ENCODE measurements at regions of chr14 and their contacts with region 1.

Region 1: DNA sequence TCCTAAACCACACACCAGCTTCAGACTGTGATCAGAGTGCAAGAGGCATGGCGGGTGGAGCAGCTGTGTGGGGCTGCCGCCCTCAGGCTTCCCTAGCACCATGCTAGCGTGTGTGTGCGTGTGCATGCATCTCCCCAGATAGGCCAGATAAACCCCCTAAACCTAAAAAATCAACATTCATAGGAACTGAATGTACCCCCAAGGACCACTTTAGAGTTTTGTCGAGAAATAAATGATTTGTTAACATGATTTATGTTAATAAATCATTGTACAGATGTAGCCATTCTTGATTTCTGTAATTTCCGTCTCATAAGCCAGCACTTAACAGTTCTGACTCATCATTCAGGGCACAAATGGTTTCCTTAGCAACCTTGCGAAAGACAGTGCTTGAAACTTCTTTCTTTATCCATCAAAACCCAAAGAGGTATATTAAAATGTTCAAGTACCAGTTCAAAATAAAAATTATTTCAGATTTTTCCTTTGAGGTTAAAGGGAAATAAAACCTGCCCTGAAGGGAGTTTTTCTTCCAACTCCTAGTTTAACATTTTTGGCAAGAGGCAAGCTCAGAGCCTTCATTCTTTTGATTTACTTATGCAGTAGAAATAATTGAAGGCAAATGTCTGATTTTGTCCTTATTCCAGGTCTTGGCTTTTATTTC is 206.2 kb upstream of the RGS6 start:
- DNase-seq: no peak
- H3K4me3 ChIP-seq: no peak overlapping the region
- H3K27ac ChIP-seq: peak overlapping the region; percentile 62 to 82
- H3K4me1 ChIP-seq: peaks cover 0 to 6% of the 10 kb centered on the region in 2 donors
- H3K27me3 ChIP-seq: no peaks in the 10 kb centered on the region
- CTCF ChIP-seq: no peak
- POLR2A ChIP-seq: no peak

Region 2: DNA sequence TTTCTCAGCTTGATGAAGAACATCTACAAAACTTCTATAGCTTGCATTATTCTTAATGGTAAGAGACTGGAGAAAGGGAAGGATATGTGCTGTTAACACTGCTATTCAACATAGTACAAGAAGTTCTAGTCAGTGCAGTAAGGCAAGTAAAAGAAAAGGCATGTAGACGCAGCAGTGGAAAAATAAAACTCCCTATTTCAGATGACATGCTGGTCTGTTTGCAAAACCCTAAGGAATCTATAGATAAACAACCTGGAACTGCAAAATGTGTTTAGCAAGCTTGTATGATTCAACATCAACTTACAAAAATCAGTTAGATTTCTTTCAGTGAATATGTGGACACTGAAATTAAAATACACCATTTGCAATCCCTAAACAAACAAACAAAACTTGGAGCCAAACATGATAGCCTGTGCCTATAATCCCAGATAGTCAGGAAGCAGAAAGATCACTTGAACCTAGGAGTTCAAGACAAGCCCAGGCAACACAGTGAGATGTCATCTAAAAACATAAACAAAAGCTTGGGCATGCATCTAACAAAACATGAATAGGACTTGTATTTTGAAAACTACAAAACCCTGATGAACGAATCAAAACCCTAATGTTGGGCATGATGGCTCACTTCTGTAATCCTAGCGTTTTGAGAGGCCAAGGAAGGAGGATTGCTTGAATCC is 87.4 kb before region 1 on chr14:
- intact Hi-C with region 1: no loop called
- DNase-seq: no peak
- H3K4me3 ChIP-seq: no peak overlapping the region
- H3K27ac ChIP-seq: no peak overlapping the region
- H3K4me1 ChIP-seq: no peaks in the 10 kb centered on the region
- H3K27me3 ChIP-seq: no peaks in the 10 kb centered on the region
- CTCF ChIP-seq: no peak
- POLR2A ChIP-seq: no peak

Region 3: DNA sequence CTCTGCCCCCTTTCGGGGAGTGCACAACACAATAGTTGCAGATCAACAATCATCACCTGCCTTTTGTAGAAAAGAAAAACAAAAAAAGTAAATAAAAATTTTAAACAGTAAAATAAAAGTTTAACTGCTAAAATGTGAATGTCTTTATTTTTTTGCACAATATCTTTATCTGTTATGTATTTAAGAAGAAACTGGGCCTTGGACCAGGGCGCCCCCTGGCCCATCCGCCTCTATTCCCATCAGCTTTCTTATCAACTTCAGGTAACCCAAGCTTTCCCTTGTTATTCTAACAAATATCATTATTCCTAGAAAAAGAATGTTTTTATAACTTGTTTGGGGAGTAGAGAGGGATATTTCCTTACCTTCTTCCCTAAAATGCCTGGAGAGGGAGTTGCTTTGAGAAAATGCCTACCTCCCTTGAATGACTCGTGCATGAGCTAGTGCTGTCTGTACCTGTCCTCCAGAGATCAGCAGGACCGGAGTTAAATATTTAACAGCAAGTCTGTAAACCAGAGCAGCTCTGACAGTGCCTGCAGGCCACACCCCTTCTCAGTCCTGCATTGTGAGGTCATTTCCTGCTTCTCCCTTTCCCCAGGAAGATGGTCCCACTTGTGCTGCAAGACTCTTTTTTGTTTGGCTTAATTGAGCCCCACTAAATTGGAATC is 13.4 kb after region 1 on chr14:
- intact Hi-C with region 1: no loop called
- DNase-seq: no peak
- H3K4me3 ChIP-seq: no peak overlapping the region
- H3K27ac ChIP-seq: peak overlapping the region in 1 of 2 donors; percentile 25
- H3K4me1 ChIP-seq: no peaks in the 10 kb centered on the region
- H3K27me3 ChIP-seq: no peaks in the 10 kb centered on the region
- CTCF ChIP-seq: no peak
- POLR2A ChIP-seq: no peak

Region 4: DNA sequence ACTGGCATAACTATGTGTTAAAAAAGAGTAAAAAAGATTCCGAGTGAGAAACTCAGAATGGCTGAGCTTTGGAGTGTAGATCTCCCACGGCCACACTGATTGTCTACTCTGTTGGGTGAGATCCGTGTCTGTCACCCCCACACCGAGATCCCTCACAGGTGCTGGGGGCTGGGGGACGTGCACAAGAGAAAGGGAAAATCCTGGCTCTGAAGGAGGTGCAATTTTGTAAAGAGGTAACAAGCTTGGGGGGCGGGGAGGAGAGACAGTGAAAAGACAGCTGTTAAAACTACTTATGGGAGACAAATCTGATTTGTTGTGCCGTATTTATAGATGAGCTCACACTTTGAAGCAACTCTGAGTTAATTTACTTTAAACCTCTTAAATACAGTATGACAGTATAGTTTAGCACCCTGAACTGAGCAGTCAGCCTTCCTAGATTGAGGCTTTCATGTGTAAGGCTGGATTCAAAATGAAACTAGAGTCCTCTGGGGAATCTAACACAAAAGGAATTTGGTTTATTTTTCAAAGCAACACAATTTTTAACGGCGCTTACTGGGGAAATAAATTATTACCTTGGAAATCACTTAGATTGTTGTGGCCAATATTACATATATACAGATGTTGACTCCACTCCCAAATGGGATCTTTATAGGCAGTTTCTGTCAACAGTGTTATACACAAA is 38.8 kb after region 1 on chr14:
- intact Hi-C with region 1: loop called (anchors 1 kb)
- DNase-seq: no peak
- H3K4me3 ChIP-seq: no peak overlapping the region
- H3K27ac ChIP-seq: no peak overlapping the region
- H3K4me1 ChIP-seq: no peaks in the 10 kb centered on the region
- H3K27me3 ChIP-seq: no peaks in the 10 kb centered on the region
- CTCF ChIP-seq: no peak
- POLR2A ChIP-seq: no peak